ENCODE measurements at regions of chr11 and their contacts with region 1.

Region 1: DNA sequence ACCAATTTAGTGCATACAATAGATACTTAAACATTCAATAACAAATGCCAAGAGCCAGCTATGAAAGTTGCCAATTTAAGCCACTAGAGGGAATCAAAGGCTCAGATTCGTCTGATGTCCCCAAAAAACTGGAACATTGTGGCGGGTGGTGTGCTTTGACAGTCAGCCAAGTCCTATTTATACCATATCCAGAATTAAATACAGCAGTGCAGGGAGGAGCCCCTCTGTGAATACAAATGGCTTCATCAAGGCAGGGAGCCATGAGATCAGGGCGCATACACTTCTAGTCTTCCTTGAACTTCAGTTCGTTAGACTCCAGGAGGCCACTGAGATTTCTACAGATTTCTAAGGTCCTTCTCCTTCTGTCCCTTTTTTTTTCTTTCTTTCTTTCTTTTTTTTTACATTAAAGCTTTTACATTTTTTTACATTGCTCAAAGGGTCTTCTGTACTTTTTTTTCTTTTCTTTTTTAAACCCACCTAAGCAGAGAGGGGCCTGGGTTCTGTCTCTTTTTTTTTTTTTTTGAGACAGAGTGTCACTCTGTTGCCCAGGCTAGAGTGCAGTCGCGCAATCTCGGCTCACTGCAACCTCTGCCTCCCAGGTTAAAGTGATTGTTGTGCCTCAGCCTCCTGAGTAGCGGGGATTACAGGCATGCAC is 41.5 kb upstream of the HSPA8 start:
- DNase-seq: peak; percentile 56 to 69 (median 60)
- H3K4me3 ChIP-seq: no peak overlapping the region
- H3K27ac ChIP-seq: peak overlapping the region in 1 of 2 donors; percentile 40
- H3K4me1 ChIP-seq: peaks cover 17% of the 10 kb centered on the region
- H3K27me3 ChIP-seq: no peaks in the 10 kb centered on the region
- CTCF ChIP-seq: peak; percentile 37 to 71 (median 65)
- EP300 ChIP-seq: no peak
- POLR2A ChIP-seq: no peak

Region 2: GRCh38 chr11:123062158-123062891 is 41.1 kb before region 1 on chr11:
- intact Hi-C with region 1: loop called in 1 of 4 experiments (anchors 5 kb)
- DNase-seq: peak; percentile 98 to 99 (median 99)
- H3K4me3 ChIP-seq: peak overlapping the region; percentile 89
- H3K27ac ChIP-seq: peak overlapping the region; percentile 95 to 96
- H3K4me1 ChIP-seq: peaks cover 8% of the 10 kb centered on the region
- H3K27me3 ChIP-seq: no peaks in the 10 kb centered on the region
- CTCF ChIP-seq: no peak
- EP300 ChIP-seq: no peak
- POLR2A ChIP-seq: peak; percentile 93

Region 3: DNA sequence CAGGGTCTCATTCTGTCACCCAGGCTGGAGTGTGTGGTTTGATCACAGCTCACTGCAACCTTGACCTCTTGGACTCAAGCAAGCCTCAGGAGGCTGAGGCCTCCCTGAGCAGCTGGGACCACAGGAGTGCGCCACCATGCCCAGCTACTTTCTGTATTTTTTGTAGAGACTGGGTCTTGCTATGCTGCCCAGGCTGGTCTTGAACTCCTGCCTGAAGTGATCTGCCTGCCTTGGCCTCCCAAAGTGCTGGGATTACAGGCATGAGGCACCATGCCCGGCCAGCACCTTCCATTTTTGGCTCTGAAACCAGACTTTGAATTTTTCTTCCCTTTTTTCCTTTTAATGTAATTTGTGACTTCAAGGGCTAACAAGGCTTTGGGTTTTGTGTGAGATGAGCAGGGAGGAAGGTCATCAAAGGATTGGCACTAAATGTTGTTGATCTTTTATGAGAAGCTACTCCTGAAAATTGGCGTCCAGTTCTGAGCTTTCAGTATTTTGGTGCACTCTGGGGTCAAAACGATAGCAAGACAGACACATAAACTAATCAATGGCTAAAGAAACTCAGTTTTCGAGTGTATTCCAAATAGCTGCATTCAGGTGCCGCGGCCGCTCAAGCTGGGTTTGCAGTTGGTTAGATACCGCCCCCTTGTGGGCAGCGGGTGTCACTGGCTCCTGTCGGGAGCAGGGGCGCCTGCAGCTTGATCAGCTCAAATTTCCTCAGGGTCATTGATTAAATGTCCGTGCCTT is 143.5 kb after region 1 on chr11:
- intact Hi-C with region 1: loop called in 2 of 4 experiments (anchors 5 kb)
- DNase-seq: peak; percentile 78 to 87 (median 85)
- H3K4me3 ChIP-seq: no peak overlapping the region
- H3K27ac ChIP-seq: no peak overlapping the region
- H3K4me1 ChIP-seq: peaks cover 2% of the 10 kb centered on the region
- H3K27me3 ChIP-seq: no peaks in the 10 kb centered on the region
- CTCF ChIP-seq: peak; percentile 83 to 93 (median 90)
- EP300 ChIP-seq: no peak
- POLR2A ChIP-seq: no peak

Region 4: DNA sequence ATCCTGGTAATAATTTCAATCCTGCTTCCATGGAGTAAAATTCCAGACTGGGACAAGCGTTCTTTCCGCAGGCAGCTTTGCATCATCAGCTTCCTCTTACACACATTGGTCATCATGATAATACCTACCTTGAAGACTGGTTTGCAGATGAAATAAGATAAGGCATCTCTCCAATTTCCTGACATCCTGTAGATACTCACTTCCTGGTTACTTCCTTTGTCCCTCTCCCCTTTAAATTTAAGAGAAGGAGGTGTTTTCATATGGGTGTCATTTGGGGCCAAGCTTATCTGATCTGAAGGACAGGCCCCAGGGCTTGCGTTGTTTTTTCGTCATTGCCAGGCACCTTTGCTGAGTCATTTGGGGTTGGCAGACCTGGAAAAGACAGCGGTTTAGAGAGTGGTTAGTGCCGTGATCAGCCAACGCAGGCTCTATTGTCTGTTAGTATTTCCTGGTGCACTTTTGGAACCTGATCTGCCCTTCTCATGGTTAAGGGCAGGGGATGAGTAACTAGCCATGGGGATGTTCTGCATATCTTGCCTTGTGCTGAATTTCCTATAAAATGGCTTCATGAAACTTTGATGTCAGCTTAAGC is 350.7 kb after region 1 on chr11:
- intact Hi-C with region 1: no loop called
- DNase-seq: no peak
- H3K4me3 ChIP-seq: no peak overlapping the region
- H3K27ac ChIP-seq: no peak overlapping the region
- H3K4me1 ChIP-seq: peaks cover 15% of the 10 kb centered on the region
- H3K27me3 ChIP-seq: no peaks in the 10 kb centered on the region
- CTCF ChIP-seq: no peak
- EP300 ChIP-seq: no peak
- POLR2A ChIP-seq: no peak

Region 5: DNA sequence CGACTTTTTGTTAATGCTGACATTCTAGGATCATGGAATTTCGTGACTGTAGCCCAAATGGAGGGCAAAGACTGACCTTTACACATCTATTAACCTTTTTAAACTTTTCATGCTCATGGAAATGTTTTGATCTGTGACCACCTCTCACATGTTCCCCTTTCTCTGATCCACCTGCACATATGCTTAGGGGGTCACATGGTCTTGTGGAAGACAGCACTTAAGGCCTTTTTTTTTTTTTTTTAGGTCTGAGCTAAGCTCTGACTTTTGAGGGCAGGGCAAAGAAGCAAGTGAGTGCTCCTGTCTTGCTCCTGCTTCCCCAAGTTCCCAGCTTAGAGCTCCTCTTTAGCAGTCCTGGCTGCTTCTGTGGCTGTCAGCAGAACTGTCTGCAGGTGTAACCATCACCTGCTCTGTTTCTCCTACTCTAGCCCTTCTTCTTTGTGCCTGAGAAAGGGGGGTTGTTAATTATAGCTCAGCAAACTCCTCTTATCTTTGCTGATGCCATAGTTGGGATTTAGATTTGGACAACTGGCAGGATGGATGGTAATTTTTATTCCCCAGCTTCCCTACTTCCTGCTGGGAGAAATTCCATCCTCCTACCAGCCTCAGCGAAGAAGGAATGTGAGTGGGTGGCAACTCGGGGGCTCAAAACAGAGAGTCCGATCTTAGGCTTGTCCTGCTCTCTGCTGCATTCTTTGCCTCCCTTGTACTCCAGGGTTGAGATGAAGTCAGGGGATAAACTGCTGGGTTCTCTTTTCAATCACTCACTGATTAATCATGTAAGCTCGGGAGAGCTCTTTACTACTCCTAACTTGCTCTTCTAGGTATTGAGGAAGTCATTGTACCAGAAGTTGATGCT is 391.0 kb after region 1 on chr11:
- intact Hi-C with region 1: loop called in 1 of 4 experiments (anchors 10 kb)
- DNase-seq: no peak
- H3K4me3 ChIP-seq: no peak overlapping the region
- H3K27ac ChIP-seq: no peak overlapping the region
- H3K4me1 ChIP-seq: no peaks in the 10 kb centered on the region
- H3K27me3 ChIP-seq: no peaks in the 10 kb centered on the region
- CTCF ChIP-seq: no peak
- EP300 ChIP-seq: no peak
- POLR2A ChIP-seq: no peak